AG04450 (cell line): ENCODE measurements at regions of chr11 and their contacts with region 1.

Region 1: GRCh38 chr11:122628810-122629555 is 26.5 kb upstream of the UBASH3B start:
- DNase-seq: peak; percentile 51
- H3K4me3 ChIP-seq: no peak overlapping the region
- H3K27ac ChIP-seq: peak overlapping the region; percentile 21
- H3K27me3 ChIP-seq: peaks cover 3% of the 10 kb centered on the region
- CTCF ChIP-seq: peak; percentile 98

Region 2: GRCh38 chr11:121372671-121373429 is 1256.1 kb before region 1 on chr11:
- CTCF ChIA-PET with region 1: no interaction called
- POLR2A ChIA-PET with region 1: no interaction called
- DNase-seq: no peak
- H3K4me3 ChIP-seq: no peak overlapping the region
- H3K27ac ChIP-seq: no peak overlapping the region
- H3K27me3 ChIP-seq: peaks cover 13% of the 10 kb centered on the region
- CTCF ChIP-seq: no peak

Region 3: GRCh38 chr11:122229481-122230384 is 399.2 kb before region 1 on chr11:
- CTCF ChIA-PET with region 1: no interaction called
- POLR2A ChIA-PET with region 1: no interaction called
- DNase-seq: no peak
- H3K4me3 ChIP-seq: no peak overlapping the region
- H3K27ac ChIP-seq: no peak overlapping the region
- H3K27me3 ChIP-seq: no peaks in the 10 kb centered on the region
- CTCF ChIP-seq: no peak

Region 4: GRCh38 chr11:122556605-122557004 is 72.4 kb before region 1 on chr11:
- CTCF ChIA-PET with region 1: no interaction called
- POLR2A ChIA-PET with region 1: no interaction called
- DNase-seq: no peak
- H3K4me3 ChIP-seq: peak overlapping the region; percentile 43
- H3K27ac ChIP-seq: no peak overlapping the region
- H3K27me3 ChIP-seq: peaks cover 3% of the 10 kb centered on the region
- CTCF ChIP-seq: peak; percentile 53

Region 5: DNA sequence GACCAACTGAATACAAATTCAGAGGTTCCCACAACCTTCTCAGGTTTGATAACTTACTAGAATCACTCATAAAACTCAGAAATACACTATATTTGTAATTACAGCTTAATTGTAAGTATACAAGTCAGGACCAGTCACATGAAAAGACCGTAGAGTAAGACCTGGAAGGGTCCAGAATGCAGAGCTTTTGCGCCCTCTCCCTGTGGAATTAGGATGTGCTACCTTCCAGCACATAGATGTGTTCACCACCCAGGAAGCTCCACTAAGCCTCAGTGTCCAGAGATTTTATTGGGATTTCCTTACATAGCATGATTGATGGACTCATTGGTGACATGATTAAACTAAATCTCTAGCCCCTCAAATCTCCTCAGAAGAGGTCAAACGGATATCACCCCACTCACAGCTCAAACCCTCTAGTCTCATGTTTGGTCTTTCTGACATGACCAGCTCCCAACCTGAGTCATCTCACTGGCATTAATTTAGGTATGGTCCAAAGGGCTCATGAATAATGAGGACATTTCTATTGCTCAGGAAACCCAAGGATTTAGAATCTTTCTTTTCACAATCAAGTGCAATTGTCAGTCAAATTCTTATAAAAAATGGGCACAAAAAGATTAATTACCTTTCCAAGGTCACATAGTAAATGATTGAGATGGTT is 50.7 kb before region 1 on chr11:
- CTCF ChIA-PET with region 1: interaction called, 14 read pairs
- POLR2A ChIA-PET with region 1: no interaction called
- DNase-seq: no peak
- H3K4me3 ChIP-seq: no peak overlapping the region
- H3K27ac ChIP-seq: no peak overlapping the region
- H3K27me3 ChIP-seq: no peaks in the 10 kb centered on the region
- CTCF ChIP-seq: peak; percentile 9; the same call in 1 of the 2 replicates

Region 6: GRCh38 chr11:122646549-122647340 is 17.8 kb after region 1 on chr11:
- CTCF ChIA-PET with region 1: interaction called, 11 read pairs
- POLR2A ChIA-PET with region 1: no interaction called
- DNase-seq: no peak
- H3K4me3 ChIP-seq: no peak overlapping the region
- H3K27ac ChIP-seq: peak overlapping the region; percentile 74
- H3K27me3 ChIP-seq: no peaks in the 10 kb centered on the region
- CTCF ChIP-seq: no peak

Region 7: GRCh38 chr11:122781378-122782195 is 152.6 kb after region 1 on chr11:
- CTCF ChIA-PET with region 1: interaction called, 106 read pairs
- POLR2A ChIA-PET with region 1: no interaction called
- DNase-seq: peak; percentile 80
- H3K4me3 ChIP-seq: no peak overlapping the region
- H3K27ac ChIP-seq: no peak overlapping the region
- H3K27me3 ChIP-seq: no peaks in the 10 kb centered on the region
- CTCF ChIP-seq: peak; percentile 94

Region 8: GRCh38 chr11:122808478-122808869 is 179.5 kb after region 1 on chr11:
- CTCF ChIA-PET with region 1: interaction called, 14 read pairs
- POLR2A ChIA-PET with region 1: no interaction called
- DNase-seq: no peak
- H3K4me3 ChIP-seq: no peak overlapping the region
- H3K27ac ChIP-seq: peak overlapping the region; percentile 76
- H3K27me3 ChIP-seq: no peaks in the 10 kb centered on the region
- CTCF ChIP-seq: no peak

Region 9: GRCh38 chr11:122853971-122854446 is 225.0 kb after region 1 on chr11:
- CTCF ChIA-PET with region 1: interaction called, 503 read pairs
- POLR2A ChIA-PET with region 1: interaction called, 4 read pairs
- DNase-seq: peak; percentile 59
- H3K4me3 ChIP-seq: no peak overlapping the region
- H3K27ac ChIP-seq: no peak overlapping the region
- H3K27me3 ChIP-seq: no peaks in the 10 kb centered on the region
- CTCF ChIP-seq: peak; percentile 69

Region 10: GRCh38 chr11:123054301-123055065 is 425.5 kb after region 1 on chr11:
- CTCF ChIA-PET with region 1: interaction called, 18 read pairs
- POLR2A ChIA-PET with region 1: no interaction called
- DNase-seq: peak; percentile 39
- H3K4me3 ChIP-seq: no peak overlapping the region
- H3K27ac ChIP-seq: no peak overlapping the region
- H3K27me3 ChIP-seq: no peaks in the 10 kb centered on the region
- CTCF ChIP-seq: peak; percentile 74